ENCODE measurements at regions of chr6 and their contacts with region 1.

Region 1: DNA sequence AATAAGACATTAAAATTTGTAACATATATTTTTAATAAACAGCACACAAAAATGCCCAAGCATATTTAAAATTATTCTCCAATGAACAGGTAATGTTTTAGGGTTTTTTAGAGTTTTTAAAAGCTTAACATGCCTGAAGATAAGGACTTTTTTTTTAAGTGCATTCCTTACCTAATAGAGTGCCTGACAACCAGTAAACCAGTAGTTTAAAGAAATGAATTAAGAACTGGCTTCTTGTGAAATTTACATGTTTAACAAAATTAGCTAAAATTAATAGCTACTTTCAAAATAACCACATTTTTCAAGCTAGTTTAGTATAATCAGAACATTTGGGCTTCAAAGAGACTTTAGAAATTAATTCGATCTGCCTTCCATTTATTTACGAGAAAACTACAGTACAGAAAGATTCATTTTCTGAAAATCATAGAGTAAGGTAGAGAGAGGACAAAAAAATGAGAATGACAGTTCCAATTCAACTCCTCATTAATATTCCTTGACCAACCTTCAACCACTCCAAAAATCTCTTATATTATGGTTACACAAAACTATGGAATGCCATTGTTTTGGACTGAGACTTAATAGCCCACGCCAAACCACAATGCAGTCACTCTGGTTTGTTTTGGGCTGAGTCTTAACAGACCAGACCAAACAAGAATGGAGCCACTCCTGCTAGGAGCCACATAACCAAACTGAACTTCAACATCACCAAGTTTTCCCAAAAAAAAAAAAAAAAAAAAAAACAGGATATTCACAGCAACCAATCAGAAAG is 5.7 kb upstream of the PLN start:
- DNase-seq: no peak
- ATAC-seq: no peak
- H3K4me3 Mint-ChIP-seq: no peak overlapping the region
- H3K27ac Mint-ChIP-seq: no peak overlapping the region
- H3K4me1 Mint-ChIP-seq: no peaks in the 10 kb centered on the region
- H3K27me3 Mint-ChIP-seq: no peaks in the 10 kb centered on the region
- CTCF ChIP-seq: no peak

Region 2: GRCh38 chr6:118124851-118125250 is 417.5 kb before region 1 on chr6:
- CTCF ChIA-PET with region 1: no interaction called
- POLR2A ChIA-PET with region 1: interaction called, 12 read pairs
- intact Hi-C with region 1: no loop called
- DNase-seq: no peak
- ATAC-seq: no peak
- H3K4me3 Mint-ChIP-seq: no peak overlapping the region
- H3K27ac Mint-ChIP-seq: no peak overlapping the region
- H3K4me1 Mint-ChIP-seq: no peaks in the 10 kb centered on the region
- H3K27me3 Mint-ChIP-seq: no peaks in the 10 kb centered on the region
- CTCF ChIP-seq: no peak

Region 3: DNA sequence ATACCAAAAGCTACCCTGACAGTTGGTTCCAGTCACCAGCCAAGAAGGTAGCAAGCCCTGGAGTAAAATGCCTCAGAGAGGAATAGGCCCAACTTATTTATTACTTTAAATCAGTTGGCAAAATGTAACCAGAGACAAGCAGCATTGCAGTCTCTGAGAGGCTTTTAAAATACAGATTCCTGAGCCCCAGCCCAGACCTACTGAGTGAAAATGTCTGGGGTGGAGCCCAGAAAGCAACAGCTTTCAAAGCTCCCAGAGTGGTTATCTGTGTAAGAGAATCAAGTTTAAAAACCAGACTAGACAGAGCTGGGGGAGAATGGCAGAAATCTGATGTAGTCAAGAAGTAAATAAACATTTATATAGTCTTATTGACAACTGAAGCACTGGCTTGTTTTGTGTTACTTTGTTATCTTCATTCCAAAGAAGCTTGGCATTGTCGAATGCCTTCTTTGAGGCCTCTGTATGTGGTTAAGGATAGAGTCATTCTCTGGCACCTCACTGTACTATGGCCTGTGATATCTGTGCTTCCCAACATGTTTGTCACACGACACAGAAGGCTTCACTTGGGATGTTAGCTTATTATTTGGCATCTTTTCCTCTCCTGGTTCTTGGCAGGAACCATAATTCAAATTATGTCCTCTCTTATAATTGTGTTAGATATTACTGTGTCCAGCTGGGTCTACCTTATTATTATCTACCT is 321.8 kb before region 1 on chr6:
- CTCF ChIA-PET with region 1: no interaction called
- POLR2A ChIA-PET with region 1: no interaction called
- intact Hi-C with region 1: no loop called
- DNase-seq: no peak
- ATAC-seq: no peak
- H3K4me3 Mint-ChIP-seq: no peak overlapping the region
- H3K27ac Mint-ChIP-seq: no peak overlapping the region
- H3K4me1 Mint-ChIP-seq: no peaks in the 10 kb centered on the region
- H3K27me3 Mint-ChIP-seq: peaks cover 2% of the 10 kb centered on the region
- CTCF ChIP-seq: no peak

Region 4: GRCh38 chr6:118528129-118528528 is 14.2 kb before region 1 on chr6:
- CTCF ChIA-PET with region 1: no interaction called
- POLR2A ChIA-PET with region 1: no interaction called
- intact Hi-C with region 1: no loop called
- DNase-seq: no peak
- ATAC-seq: no peak
- H3K4me3 Mint-ChIP-seq: no peak overlapping the region
- H3K27ac Mint-ChIP-seq: no peak overlapping the region
- H3K4me1 Mint-ChIP-seq: peaks cover 13% of the 10 kb centered on the region
- H3K27me3 Mint-ChIP-seq: no peaks in the 10 kb centered on the region
- CTCF ChIP-seq: no peak

Measured in activated B cell treated with CpG ODN at 0.5 μM for 24 hours (primary cell).